GM12878 (cell line): ENCODE measurements at regions of chr10 and their contacts with region 1.

Region 1: DNA sequence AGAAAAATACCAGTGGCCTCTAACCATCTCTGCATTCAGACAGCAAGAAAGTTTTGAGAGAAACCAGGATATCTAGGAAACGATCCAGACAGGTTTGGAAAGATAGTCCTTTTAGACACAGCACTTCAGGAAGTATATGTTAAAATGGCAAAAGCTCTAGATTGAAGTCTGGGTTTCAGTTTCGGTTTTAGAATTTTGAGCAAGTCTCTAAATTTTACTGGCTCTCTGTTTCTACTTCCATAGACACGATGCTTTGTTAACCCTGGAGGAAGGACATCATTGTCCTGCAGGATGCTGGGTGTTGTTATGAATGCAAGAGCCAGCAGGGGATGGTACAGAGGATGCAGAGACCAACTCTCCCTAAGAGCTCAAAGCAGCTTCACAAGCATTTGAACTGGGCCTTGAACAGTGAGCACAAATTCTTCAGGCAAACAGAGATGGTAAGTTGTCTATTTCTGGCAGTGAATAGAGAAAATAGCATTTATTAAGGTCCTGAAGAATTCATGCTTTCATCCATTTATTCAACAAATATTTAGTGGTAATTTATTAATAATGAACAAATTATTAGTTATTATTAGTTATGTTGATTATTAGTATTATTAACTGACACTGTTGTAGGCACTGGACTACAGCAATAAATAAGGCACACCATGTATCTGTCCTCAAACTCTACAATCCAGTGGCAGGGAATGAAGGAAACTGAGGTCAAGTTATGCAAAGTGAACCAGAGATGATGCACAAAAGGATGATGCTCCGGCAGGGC is 152.7 kb upstream of the NRP1 start:
- DNase-seq: no peak
- ATAC-seq: peak; percentile 32
- H3K4me3 ChIP-seq: no peak overlapping the region
- H3K27ac ChIP-seq: no peak overlapping the region
- H3K4me1 ChIP-seq: no peaks in the 10 kb centered on the region
- H3K27me3 ChIP-seq: no peaks in the 10 kb centered on the region
- CTCF ChIP-seq: no peak
- EP300 ChIP-seq: no peak
- POLR2A ChIP-seq: no peak
- RAD21 ChIP-seq: no peak

Region 2: DNA sequence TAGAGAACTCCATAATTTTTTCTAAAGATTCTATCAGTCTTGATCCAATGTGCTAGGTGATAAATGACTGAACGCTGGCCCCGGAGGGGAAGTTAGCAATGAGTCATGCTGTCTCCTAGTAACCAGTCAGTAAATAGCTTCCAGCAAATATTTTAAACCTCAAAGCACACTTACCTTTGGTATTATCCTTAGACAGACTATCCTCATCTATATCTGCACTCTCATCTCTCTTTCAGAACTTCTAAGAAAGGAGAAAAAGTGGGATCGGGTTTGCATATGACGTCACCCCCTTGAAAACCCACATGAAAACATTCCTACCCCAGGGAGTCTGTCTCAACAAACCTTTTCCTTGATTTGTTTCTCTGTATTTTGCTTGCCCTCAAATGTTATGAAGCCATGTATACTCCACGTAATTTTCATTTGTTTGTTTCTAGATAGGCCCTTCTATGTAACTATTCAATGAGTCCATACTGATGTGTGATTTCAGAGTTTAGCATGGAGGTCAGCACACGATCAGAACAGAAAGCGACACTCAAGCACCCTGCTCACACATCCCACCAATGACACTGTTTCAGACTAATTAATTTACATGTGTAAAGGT is 22.1 kb after region 1 on chr10:
- CTCF ChIA-PET with region 1: interaction called, 7 read pairs
- POLR2A ChIA-PET with region 1: interaction called, 7 read pairs
- RAD21 ChIA-PET with region 1: interaction called, 16 read pairs
- SMC1A ChIA-PET with region 1: interaction called, 4 read pairs
- in situ Hi-C with region 1: no loop called
- intact Hi-C with region 1: no loop called
- DNase-seq: peak; percentile 25
- ATAC-seq: peak; percentile 87
- H3K4me3 ChIP-seq: no peak overlapping the region
- H3K27ac ChIP-seq: no peak overlapping the region
- H3K4me1 ChIP-seq: no peaks in the 10 kb centered on the region
- H3K27me3 ChIP-seq: no peaks in the 10 kb centered on the region
- CTCF ChIP-seq: no peak
- EP300 ChIP-seq: peak; percentile 70 to 84; a peak in 3 of 4 replicates
- POLR2A ChIP-seq: no peak
- RAD21 ChIP-seq: no peak